ENCODE measurements at regions of chr20 and their contacts with region 1.

Region 1: DNA sequence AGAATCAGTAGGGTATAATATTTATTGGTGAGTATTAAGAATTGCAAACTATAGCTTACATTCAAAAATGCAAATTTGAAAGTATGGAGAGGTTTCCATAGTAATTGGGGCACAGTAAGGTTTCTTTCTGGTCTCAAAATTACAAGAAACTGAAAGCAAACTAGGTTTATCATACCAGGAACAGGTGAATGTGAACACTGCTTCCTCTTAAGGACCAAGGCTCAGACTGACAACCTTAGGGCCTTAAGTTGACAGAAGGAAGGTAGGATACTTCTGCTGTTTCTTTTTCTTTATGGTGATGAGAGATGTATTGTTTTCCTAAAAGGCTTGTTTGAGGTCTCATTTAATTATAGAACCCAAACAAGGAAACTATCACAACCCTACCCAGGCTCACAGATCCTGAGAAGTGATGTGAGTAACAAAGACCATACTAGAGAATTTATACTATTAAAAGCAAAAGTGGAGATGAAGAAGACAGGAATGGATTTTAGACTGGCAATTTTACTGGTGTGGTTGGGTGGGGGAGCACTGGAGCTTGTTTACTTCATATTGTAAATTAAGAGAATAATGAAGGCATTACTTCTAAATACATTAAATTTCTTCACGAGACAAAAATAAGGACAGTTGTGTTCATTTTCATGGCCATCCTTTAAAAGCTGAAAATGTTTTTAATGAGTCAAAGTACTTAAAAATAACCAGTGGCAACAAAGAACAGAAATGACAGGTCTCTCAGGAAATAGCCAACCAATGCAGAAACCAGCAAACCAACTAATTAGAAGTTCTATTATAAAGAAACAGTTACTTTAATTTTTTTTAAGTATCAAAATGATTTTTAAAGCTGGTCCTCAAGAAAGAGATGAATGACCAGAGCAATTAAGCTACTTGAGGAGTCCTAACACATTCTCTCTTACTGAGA is 21.3 kb downstream of the STAU1 start:
- DNase-seq: no peak
- ATAC-seq: peak; percentile 79
- H3K4me3 Mint-ChIP-seq: peak overlapping the region; percentile 37
- H3K27ac Mint-ChIP-seq: peak overlapping the region; percentile 85
- H3K4me1 Mint-ChIP-seq: peaks cover 74% of the 10 kb centered on the region
- H3K27me3 Mint-ChIP-seq: no peaks in the 10 kb centered on the region

Region 2: GRCh38 chr20:49132995-49133478 is 33.8 kb before region 1 on chr20:
- CTCF ChIA-PET with region 1: interaction called, 20 read pairs
- POLR2A ChIA-PET with region 1: interaction called, 14 read pairs
- intact Hi-C with region 1: loop called in 1 of 2 experiments (anchors 5 kb)
- DNase-seq: no peak
- ATAC-seq: peak; percentile 61
- H3K4me3 Mint-ChIP-seq: no peak overlapping the region
- H3K27ac Mint-ChIP-seq: peak overlapping the region; percentile 37
- H3K4me1 Mint-ChIP-seq: peaks cover 4% of the 10 kb centered on the region
- H3K27me3 Mint-ChIP-seq: no peaks in the 10 kb centered on the region

Region 3: DNA sequence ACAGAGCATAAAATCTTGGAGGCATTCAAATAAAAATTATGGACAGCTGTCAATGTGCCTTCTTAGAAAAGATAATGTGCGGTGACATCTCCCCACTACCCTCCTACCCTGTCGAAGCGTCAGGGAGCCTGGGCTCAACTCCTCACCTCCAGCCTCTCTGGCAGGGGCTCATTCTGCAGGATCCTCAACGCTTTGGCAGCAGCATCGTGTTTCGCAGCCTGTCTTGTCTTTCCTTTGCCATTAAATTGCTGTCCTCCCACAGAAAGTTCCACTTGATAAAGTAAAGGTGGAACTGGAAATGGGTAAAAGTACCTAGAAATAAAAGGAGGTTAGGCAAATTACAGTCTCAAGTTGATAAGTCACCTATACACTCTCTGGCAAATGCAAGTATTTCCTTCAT is 15.4 kb before region 1 on chr20:
- CTCF ChIA-PET with region 1: interaction called, 12 read pairs
- POLR2A ChIA-PET with region 1: no interaction called
- intact Hi-C with region 1: no loop called
- DNase-seq: no peak
- ATAC-seq: no peak
- H3K4me3 Mint-ChIP-seq: no peak overlapping the region
- H3K27ac Mint-ChIP-seq: peak overlapping the region; percentile 25
- H3K4me1 Mint-ChIP-seq: peaks cover 11% of the 10 kb centered on the region
- H3K27me3 Mint-ChIP-seq: no peaks in the 10 kb centered on the region

Region 4: GRCh38 chr20:49179368-49180277 is 12.8 kb after region 1 on chr20:
- CTCF ChIA-PET with region 1: interaction called, 43 read pairs
- POLR2A ChIA-PET with region 1: interaction called, 5 read pairs
- intact Hi-C with region 1: no loop called
- DNase-seq: no peak
- ATAC-seq: peak; percentile 45
- H3K4me3 Mint-ChIP-seq: no peak overlapping the region
- H3K27ac Mint-ChIP-seq: peak overlapping the region; percentile 35
- H3K4me1 Mint-ChIP-seq: peaks cover 63% of the 10 kb centered on the region
- H3K27me3 Mint-ChIP-seq: no peaks in the 10 kb centered on the region

Region 5: GRCh38 chr20:49186535-49187329 is 19.9 kb after region 1 on chr20:
- CTCF ChIA-PET with region 1: interaction called, 43 read pairs
- POLR2A ChIA-PET with region 1: interaction called, 5 read pairs
- intact Hi-C with region 1: loop called (anchors 1 to 2 kb)
- DNase-seq: peak; percentile 85
- ATAC-seq: peak; percentile 49
- H3K4me3 Mint-ChIP-seq: peak overlapping the region; percentile 96
- H3K27ac Mint-ChIP-seq: peak overlapping the region; percentile 89
- H3K4me1 Mint-ChIP-seq: peaks cover 51% of the 10 kb centered on the region
- H3K27me3 Mint-ChIP-seq: no peaks in the 10 kb centered on the region

Region 6: DNA sequence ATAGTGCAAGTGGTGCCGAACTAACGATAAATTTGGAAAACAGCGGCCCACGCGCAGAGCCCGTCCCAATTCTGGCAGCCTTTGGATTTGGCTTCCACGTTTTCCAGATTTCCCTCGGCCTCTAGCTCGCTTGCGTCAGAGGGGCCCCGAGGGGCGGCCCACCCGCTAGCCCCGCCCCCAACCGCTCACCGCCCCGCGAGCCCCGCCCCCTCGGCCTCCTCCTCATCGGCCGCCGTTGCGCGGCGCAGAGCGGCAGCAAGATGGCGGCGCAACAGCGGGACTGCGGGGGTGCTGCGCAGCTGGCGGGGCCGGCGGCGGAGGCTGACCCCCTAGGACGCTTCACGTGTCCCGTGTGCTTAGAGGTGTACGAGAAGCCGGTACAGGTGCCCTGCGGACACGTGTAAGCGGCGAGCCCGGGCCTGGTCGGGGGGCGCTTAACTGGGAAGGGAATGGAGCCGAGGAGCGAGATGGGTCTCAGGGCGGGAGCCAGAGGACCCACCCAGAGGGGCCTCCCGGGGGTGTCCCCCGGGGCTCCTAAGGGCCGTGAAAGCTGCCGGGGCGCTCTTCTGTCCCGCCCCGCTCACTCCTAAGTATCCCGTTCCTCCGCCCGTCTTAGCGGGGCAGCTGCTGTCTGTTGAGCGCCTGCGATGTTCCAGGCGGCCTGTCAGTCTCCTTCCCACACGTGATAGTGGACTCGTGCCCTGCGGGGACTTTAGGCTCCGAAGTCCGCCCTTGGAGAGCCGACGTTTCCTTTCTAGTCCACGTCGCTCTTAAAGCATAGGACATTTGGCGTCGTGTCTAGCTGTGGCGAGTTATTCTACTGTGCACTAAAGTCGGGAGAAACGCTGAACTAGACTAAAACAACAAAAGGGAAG is 769.6 kb after region 1 on chr20 and contains the start of gene RNF114:
- CTCF ChIA-PET with region 1: no interaction called
- POLR2A ChIA-PET with region 1: no interaction called
- intact Hi-C with region 1: loop called in 1 of 2 experiments (anchors 10 kb)
- DNase-seq: peak; percentile 96
- ATAC-seq: peak; percentile 93
- H3K4me3 Mint-ChIP-seq: peak within 1 kb of the TSS; percentile 85
- H3K27ac Mint-ChIP-seq: peak within 1 kb of the TSS; percentile 85
- H3K4me1 Mint-ChIP-seq: peaks cover 41% of the 10 kb centered on the region
- H3K27me3 Mint-ChIP-seq: no peaks in the 10 kb centered on the region
- total RNA-seq, gene RNF114: 47.5 to 66.6 TPM

Measured in activated CD4-positive, alpha-beta T cell treated with anti-CD3 and anti-CD28 coated beads for 36 hours (primary cell).